Dorsolateral prefrontal cortex (tissue), 120 donors: ENCODE measurements at regions of chr5 and their contacts with region 1.

Region 1: DNA sequence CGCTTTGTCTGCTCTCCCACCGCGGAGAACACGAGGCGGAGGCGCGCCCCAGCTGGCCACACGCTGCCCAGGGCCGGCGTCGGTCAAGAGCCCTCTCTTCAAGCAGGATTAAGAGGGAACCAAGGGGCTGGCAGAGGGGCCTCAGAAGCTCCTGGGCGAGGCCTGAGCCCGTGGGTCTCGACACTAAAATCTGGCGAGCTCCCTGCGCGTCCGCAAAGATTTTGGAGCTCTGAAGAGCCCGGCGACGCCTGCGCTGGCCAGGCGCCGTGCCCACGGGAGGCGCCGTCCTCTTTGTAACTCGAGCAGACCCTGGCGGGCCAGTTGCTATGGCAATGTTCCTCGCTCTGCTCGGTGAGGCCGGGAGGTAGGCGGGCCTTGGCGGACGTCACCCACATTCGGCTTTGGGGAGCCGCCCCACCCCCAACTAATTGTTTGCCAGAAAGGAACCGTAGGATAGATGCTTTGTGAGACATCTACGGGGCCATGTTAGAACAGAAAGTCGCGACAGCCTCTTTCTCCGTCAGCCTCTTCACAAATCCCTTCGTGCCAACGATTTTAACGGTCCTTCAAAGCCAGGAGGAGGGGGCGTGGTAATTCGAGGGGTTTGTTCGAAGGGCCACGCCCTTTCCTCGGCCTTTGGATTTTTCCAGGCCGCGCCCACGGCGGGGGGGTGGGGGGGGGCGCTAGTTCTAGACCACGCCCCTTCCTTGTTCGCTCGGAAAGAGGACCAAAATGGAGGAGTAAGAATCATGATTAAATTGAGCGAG is 714 bp upstream of the CNOT8 start:
- DNase-seq: peak; percentile 84 to 96 (median 94)
- H3K4me3 ChIP-seq: peak overlapping the region; percentile 55 to 92 (median 82)
- H3K27ac ChIP-seq: peak overlapping the region; percentile 73 to 100 (median 99)
- H3K27me3 ChIP-seq: no peaks in the 10 kb centered on the region
- CTCF ChIP-seq: peak in 33 of 56 donors; percentile 2 to 40 (median 27)

Region 2: GRCh38 chr5:153276151-153276550 is 1581.6 kb before region 1 on chr5:
- intact Hi-C with region 1: no loop called
- DNase-seq: peak in 1 of 10 donors; percentile 11
- H3K4me3 ChIP-seq: no peak overlapping the region
- H3K27ac ChIP-seq: no peak overlapping the region
- H3K27me3 ChIP-seq: no peaks in the 10 kb centered on the region
- CTCF ChIP-seq: no peak

Region 3: GRCh38 chr5:154683101-154683880 is 174.4 kb before region 1 on chr5:
- intact Hi-C with region 1: loop called in 1 of 2 experiments (anchors 10 kb)
- DNase-seq: no peak
- H3K4me3 ChIP-seq: peak overlapping the region; percentile 33 to 80 (median 65)
- H3K27ac ChIP-seq: peak overlapping the region in 54 of 59 donors; percentile 12 to 91 (median 80)
- H3K27me3 ChIP-seq: no peaks in the 10 kb centered on the region
- CTCF ChIP-seq: no peak

Region 4: GRCh38 chr5:154783774-154784460 is 73.8 kb before region 1 on chr5:
- intact Hi-C with region 1: no loop called
- DNase-seq: no peak
- H3K4me3 ChIP-seq: no peak overlapping the region
- H3K27ac ChIP-seq: peak overlapping the region in 24 of 59 donors; percentile 3 to 57 (median 29)
- H3K27me3 ChIP-seq: no peaks in the 10 kb centered on the region
- CTCF ChIP-seq: no peak

Region 5: GRCh38 chr5:154818471-154819116 is 39.1 kb before region 1 on chr5:
- intact Hi-C with region 1: loop called in 1 of 2 experiments (anchors 5 kb)
- DNase-seq: no peak
- H3K4me3 ChIP-seq: no peak overlapping the region
- H3K27ac ChIP-seq: peak overlapping the region in 35 of 59 donors; percentile 0 to 71 (median 35)
- H3K27me3 ChIP-seq: no peaks in the 10 kb centered on the region
- CTCF ChIP-seq: no peak